GM12878 (cell line): ENCODE measurements at regions of chr15 and their contacts with region 1.

Region 1: DNA sequence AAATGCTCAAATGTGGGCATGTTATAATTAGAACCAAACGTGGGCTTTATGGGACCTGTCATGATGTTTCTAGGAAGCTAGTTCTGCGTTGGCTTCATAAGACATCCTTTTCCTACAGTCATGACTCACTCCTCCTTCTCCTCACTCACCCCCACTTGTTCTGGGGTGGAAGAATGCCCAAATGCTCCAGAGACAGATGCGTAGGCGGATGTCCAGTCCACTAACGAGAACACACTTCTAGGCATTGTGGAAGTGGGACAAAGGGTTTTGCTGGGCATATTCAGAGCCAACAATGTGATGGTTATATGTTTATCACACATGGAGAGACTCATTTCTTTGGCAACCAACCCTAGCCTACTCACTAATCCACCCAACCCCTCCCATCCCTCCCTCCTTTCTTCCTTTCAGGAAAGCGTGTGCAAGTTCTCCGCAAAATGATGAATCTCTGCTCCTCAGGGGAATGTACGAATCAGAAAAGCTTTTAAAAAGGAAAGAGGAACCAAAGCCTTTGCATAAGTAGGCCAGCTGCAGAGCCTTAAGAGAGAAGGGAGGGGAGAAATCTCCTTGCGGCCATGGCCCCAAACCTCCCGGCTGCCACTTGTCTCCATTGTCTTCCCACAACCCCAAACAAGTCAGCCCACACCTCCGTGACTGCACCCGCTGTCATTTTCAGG is 123.0 kb upstream of the SPRED1 start:
- DNase-seq: peak; percentile 39
- ATAC-seq: peak; percentile 81
- H3K4me3 ChIP-seq: peak overlapping the region; percentile 38; the same call in 1 of the 2 replicates
- H3K27ac ChIP-seq: peak overlapping the region; percentile 20; the same call in 1 of the 2 replicates
- H3K4me1 ChIP-seq: peaks cover 17% of the 10 kb centered on the region
- H3K27me3 ChIP-seq: no peaks in the 10 kb centered on the region
- CTCF ChIP-seq: no peak
- EP300 ChIP-seq: peak in 1 of 2 experiments; percentile 32; a peak in 1 of 4 replicates
- POLR2A ChIP-seq: no peak
- RAD21 ChIP-seq: no peak

Region 2: DNA sequence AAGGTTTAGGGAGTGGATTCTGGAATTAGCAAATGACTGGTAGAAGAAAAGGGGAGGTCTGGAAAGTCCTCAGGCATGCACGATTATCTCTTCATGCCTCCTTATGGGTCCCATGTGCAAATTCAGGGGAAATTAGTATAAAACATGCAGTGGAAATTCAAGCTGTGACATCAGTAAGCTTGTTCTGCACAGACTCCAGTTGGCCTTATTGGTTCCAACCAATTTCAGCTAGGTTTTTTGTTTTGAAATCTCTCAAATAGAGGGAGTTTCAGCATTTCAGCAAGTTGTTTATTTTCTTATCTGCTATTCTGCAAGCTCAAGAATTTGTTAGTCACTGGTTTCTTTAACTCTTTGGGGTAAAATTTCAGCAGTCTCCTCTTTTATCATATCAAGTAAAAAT is 196.0 kb before region 1 on chr15:
- CTCF ChIA-PET with region 1: no interaction called
- POLR2A ChIA-PET with region 1: no interaction called
- RAD21 ChIA-PET with region 1: no interaction called
- SMC1A ChIA-PET with region 1: no interaction called
- in situ Hi-C with region 1: no loop called
- intact Hi-C with region 1: no loop called
- DNase-seq: no peak
- ATAC-seq: no peak
- H3K4me3 ChIP-seq: no peak overlapping the region
- H3K27ac ChIP-seq: no peak overlapping the region
- H3K4me1 ChIP-seq: no peaks in the 10 kb centered on the region
- H3K27me3 ChIP-seq: no peaks in the 10 kb centered on the region
- CTCF ChIP-seq: no peak
- EP300 ChIP-seq: no peak
- POLR2A ChIP-seq: no peak
- RAD21 ChIP-seq: no peak

Region 3: DNA sequence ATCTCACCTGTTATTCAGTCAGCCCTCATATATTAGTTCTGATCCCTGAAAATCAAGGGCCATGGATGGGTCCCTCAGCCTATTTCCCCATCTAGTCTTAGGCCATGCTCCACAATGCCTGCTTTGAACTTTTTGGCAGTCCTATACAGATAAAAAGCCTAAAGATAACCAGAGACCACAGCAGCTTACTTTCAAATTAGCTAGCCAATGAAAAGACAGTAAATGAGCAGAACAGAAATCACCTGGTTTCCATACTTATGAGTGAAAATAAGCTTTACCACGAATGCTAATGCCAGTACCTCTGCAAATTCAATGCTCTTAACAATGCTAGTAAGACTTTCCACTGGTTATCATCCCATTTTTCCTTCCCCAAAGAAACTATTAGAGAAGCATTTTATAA is 18.6 kb before region 1 on chr15:
- CTCF ChIA-PET with region 1: interaction called, 3 read pairs
- POLR2A ChIA-PET with region 1: interaction called, 4 read pairs
- RAD21 ChIA-PET with region 1: interaction called, 5 read pairs
- SMC1A ChIA-PET with region 1: interaction called, 14 read pairs
- in situ Hi-C with region 1: no loop called
- intact Hi-C with region 1: no loop called
- DNase-seq: no peak
- ATAC-seq: peak; percentile 61
- H3K4me3 ChIP-seq: 0 out of 2 replicates have a peak overlapping the region, but pooled peaks have one; percentile 27
- H3K27ac ChIP-seq: no peak overlapping the region
- H3K4me1 ChIP-seq: no peaks in the 10 kb centered on the region
- H3K27me3 ChIP-seq: no peaks in the 10 kb centered on the region
- CTCF ChIP-seq: no peak
- EP300 ChIP-seq: no peak
- POLR2A ChIP-seq: no peak
- RAD21 ChIP-seq: no peak

Region 4: DNA sequence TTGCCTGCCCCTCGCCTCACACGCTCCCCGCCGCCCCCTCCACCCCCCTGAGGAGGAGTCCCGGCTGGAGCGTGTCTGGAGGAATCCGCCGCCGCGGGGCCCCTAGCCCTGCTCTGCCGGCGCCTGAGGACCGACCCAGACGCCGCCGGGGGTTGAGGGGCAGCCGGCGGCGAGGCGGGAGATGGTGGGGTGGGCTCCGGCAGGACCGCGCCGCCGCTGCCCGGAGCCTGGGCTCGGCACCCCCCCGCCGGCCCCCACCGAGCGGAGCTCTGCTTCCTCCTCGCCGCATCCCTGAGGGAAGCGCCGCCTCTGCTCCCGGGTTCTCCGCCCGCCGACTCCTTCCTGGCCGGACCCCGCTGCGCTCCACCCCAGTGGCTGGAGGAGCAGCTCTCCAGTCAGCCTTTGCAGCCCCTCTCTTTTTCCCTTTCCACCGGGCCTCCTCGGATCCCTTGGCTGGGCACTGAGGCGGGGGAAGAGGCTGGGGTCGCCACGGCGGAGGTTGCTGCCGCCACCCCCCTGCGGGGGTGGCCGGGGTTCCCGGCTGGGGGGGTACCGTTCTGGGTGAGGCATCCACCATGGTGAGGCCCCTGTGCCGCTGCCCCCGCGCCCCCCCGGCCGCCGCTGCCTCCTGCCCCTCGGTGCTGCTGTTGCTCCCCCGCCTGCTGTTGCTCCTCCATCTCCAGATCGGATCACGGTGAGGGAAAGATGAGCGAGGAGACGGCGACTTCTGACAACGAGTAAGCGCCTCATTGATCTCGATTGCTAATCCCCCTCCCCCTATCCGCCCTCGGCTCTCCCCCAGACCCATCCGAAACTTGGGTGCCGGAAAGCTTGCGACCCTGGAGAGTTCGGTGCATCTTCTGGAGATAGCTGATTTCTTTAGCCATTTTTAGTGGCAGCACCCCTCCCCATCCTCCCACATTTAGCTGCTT is 123.1 kb after region 1 on chr15 and contains the start of gene SPRED1:
- CTCF ChIA-PET with region 1: no interaction called
- POLR2A ChIA-PET with region 1: no interaction called
- RAD21 ChIA-PET with region 1: interaction called, 7 read pairs
- SMC1A ChIA-PET with region 1: no interaction called
- in situ Hi-C with region 1: no loop called
- intact Hi-C with region 1: loop called (anchors 5 kb)
- DNase-seq: no peak
- ATAC-seq: peak; percentile 57
- H3K4me3 ChIP-seq: peak within 1 kb of the TSS; percentile 94
- H3K27ac ChIP-seq: peak within 1 kb of the TSS; percentile 62
- H3K4me1 ChIP-seq: peaks cover 3% of the 10 kb centered on the region; the same call in 1 of the 2 replicates
- H3K27me3 ChIP-seq: no peaks in the 10 kb centered on the region; a peak in 2 of 4 replicates
- CTCF ChIP-seq: no peak
- EP300 ChIP-seq: no peak
- POLR2A ChIP-seq: no peak
- RAD21 ChIP-seq: no peak
- polyA plus RNA-seq, gene SPRED1: 0.08 to 0.13 TPM